ENCODE measurements at regions of chr1 and their contacts with region 1.

Region 1: DNA sequence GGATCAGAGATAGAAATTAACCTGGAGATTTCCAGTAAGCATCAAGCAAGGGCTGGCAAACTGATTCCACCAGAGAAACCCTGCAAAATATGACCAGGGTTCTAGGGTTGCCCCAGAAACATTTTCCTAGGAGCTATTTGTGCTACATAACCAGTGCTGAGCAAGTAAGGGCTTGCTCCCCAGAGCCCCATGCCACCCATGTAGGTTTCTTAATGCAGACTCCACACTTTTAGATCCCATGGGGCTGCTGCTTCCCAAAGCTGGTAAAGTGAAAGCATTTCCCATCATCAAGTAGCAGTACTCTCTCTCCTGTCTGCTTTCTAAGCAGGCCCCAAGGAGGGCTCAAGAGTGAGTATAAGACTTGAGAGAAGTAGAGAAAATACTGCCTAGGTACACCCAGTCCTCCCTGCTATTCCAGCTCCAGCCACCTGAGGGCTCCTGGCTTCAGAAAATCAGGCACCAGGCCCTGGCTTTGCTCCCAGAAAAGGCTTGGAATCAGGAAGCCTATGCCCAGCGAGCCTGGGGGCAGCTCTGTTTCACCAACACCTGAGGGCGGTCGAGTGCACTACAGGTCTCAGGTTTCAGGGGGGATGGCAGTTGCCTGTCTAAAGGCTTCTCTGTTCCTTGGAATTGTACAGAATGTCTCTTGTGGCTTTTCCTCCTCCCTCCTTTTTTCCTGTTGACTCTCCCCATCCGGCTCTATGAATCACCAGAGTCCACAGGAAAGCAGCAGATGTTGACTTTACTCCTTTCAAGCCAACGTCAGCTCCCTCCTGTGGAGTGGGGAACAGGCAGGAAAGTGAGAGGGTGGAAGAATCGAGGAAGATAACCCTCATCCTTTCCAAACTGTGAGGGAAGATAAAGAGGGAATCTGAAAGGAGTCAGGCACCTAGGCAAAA is 6.2 kb upstream of the ANKRD35 start:
- DNase-seq: peak; percentile 99
- H3K4me3 ChIP-seq: peak overlapping the region in 2 of 3 experiments; percentile 1 to 8
- H3K27ac ChIP-seq: peak overlapping the region; percentile 97
- H3K4me1 ChIP-seq: peaks cover 36% of the 10 kb centered on the region
- H3K27me3 ChIP-seq: no peaks in the 10 kb centered on the region
- CTCF ChIP-seq: peak; percentile 94 to 99

Region 2: DNA sequence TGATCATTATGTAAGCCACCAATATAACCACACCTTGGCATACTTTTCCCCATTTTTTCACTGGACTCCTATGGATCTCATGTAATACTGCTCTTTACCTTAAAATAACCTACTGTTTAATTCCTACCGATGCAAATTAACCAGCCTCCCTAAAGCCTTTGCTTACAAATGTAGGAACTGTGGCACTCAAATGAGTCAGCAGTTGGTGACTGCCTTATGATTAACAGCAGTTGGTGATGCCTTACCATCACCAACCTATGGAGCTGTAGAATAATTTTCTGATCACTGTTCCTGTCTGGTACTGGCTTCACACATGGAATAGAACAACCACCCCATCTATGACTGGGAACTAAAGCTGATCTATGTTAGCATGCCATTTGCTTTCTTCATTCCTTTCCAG is 54.2 kb before region 1 on chr1:
- CTCF ChIA-PET with region 1: interaction called, 10 read pairs
- dilution Hi-C with region 1: no loop called
- in situ Hi-C with region 1: no loop called
- intact Hi-C with region 1: no loop called
- DNase-seq: no peak
- H3K4me3 ChIP-seq: no peak overlapping the region
- H3K27ac ChIP-seq: no peak overlapping the region
- H3K4me1 ChIP-seq: no peaks in the 10 kb centered on the region
- H3K27me3 ChIP-seq: no peaks in the 10 kb centered on the region
- CTCF ChIP-seq: no peak

Region 3: DNA sequence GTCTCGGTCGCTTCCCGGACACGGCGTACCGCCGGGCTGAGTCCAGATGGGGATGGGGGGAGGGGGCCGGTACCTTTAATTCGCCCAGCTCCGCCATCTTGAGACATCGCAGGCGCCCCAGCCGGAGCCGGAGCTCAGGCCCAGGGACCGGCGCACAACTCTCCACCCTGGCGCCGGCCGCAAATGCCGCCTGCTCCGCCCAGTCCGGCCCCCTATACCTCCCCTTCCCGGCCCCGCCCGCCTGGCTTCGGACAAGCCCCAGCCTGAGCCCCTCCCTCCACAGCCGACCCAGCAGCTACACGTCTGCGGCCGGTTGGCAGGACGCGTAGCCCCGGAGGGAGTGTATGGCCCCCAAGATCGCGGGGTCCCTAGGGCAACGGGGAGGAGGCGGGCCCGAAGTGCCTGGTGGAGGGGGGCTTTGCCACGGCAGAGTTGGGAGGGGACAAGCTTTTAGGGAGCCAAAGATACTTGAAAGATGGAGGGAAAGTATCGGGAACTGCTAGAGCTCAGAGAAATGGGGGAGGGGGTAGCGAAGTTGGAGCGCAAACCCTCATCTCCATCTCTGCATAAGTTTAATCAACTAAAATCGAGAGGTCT is 32.8 kb before region 1 on chr1 and contains the start of gene PIAS3:
- CTCF ChIA-PET with region 1: interaction called, 13 read pairs
- dilution Hi-C with region 1: no loop called
- in situ Hi-C with region 1: no loop called
- intact Hi-C with region 1: no loop called
- DNase-seq: peak; percentile 93
- H3K4me3 ChIP-seq: peak within 1 kb of the TSS; percentile 56 to 94 (median 80)
- H3K27ac ChIP-seq: peak within 1 kb of the TSS; percentile 29
- H3K4me1 ChIP-seq: peaks cover 13% of the 10 kb centered on the region
- H3K27me3 ChIP-seq: no peaks in the 10 kb centered on the region
- CTCF ChIP-seq: no peak
- total RNA-seq, gene PIAS3: 21.7 to 58.8 TPM

Region 4: GRCh38 chr1:145918144-145918992 is 26.5 kb after region 1 on chr1 and contains the start of gene PEX11B:
- CTCF ChIA-PET with region 1: no interaction called
- dilution Hi-C with region 1: no loop called
- in situ Hi-C with region 1: no loop called
- intact Hi-C with region 1: loop called (anchors 1 kb)
- DNase-seq: peak; percentile 85
- H3K4me3 ChIP-seq: peak within 1 kb of the TSS; percentile 51 to 89 (median 69)
- H3K27ac ChIP-seq: peak within 1 kb of the TSS; percentile 73
- H3K4me1 ChIP-seq: peaks cover 24% of the 10 kb centered on the region
- H3K27me3 ChIP-seq: no peaks in the 10 kb centered on the region
- CTCF ChIP-seq: no peak
- total RNA-seq, gene PEX11B: 30.4 to 36.3 TPM

Region 5: GRCh38 chr1:145978854-145979759 is 87.3 kb after region 1 on chr1:
- CTCF ChIA-PET with region 1: interaction called, 3 read pairs
- dilution Hi-C with region 1: no loop called
- in situ Hi-C with region 1: no loop called
- intact Hi-C with region 1: loop called (anchors 1 kb)
- DNase-seq: peak; percentile 99
- H3K4me3 ChIP-seq: no peak overlapping the region
- H3K27ac ChIP-seq: peak overlapping the region; percentile 89
- H3K4me1 ChIP-seq: peaks cover 38% of the 10 kb centered on the region
- H3K27me3 ChIP-seq: no peaks in the 10 kb centered on the region
- CTCF ChIP-seq: peak; percentile 7 to 46

Region 6: GRCh38 chr1:146012737-146013403 is 121.0 kb after region 1 on chr1:
- CTCF ChIA-PET with region 1: no interaction called
- dilution Hi-C with region 1: no loop called
- in situ Hi-C with region 1: loop called in 1 of 2 experiments (anchors 10 kb)
- intact Hi-C with region 1: loop called (anchors 1 kb)
- DNase-seq: peak; percentile 65
- H3K4me3 ChIP-seq: no peak overlapping the region
- H3K27ac ChIP-seq: no peak overlapping the region
- H3K4me1 ChIP-seq: no peaks in the 10 kb centered on the region
- H3K27me3 ChIP-seq: no peaks in the 10 kb centered on the region
- CTCF ChIP-seq: peak; percentile 78 to 81